GM12878 (cell line): ENCODE measurements at regions of chr11 and their contacts with region 1.

Region 1: DNA sequence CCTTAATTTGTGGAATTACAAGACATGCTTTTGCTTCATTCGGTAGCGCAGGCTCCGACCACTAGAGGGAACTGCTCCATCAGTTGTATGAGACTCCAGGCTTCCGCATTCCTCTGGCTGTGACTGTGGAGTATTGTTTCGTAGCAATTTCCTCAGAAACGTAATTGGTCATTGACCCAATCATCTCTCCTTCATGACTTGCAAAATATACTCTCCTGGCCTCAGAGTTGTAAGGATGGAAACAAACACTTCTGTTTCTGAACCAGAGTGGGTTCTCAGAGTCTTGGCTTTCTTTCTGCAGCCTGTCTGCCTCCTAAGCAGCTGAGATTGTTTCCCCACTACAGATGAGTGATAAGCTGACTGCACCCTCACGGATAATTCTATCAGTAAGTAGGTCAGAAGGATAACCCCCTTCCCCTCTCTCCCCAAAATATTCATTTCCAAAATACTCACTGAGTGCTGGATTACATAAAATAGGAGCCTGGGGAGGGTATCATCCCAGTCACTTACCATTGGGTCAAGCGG is 146.8 kb upstream of the ZC3H12C start:
- DNase-seq: peak; percentile 92
- ATAC-seq: peak; percentile 93
- H3K4me3 ChIP-seq: peak overlapping the region; percentile 50; the same call in 1 of the 2 replicates
- H3K27ac ChIP-seq: peak overlapping the region; percentile 83
- H3K4me1 ChIP-seq: peaks cover 6% of the 10 kb centered on the region; the same call in 1 of the 2 replicates
- H3K27me3 ChIP-seq: no peaks in the 10 kb centered on the region
- CTCF ChIP-seq: peak; percentile 93 to 98 (median 96)
- EP300 ChIP-seq: no peak
- POLR2A ChIP-seq: no peak
- RAD21 ChIP-seq: peak; percentile 97

Region 2: GRCh38 chr11:109853156-109853776 is 93.1 kb before region 1 on chr11:
- CTCF ChIA-PET with region 1: interaction called, 251 read pairs
- POLR2A ChIA-PET with region 1: no interaction called
- RAD21 ChIA-PET with region 1: interaction called, 186 read pairs
- SMC1A ChIA-PET with region 1: interaction called, 165 read pairs
- in situ Hi-C with region 1: no loop called
- intact Hi-C with region 1: no loop called
- DNase-seq: peak; percentile 56
- ATAC-seq: peak; percentile 89
- H3K4me3 ChIP-seq: no peak overlapping the region
- H3K27ac ChIP-seq: no peak overlapping the region
- H3K4me1 ChIP-seq: no peaks in the 10 kb centered on the region
- H3K27me3 ChIP-seq: no peaks in the 10 kb centered on the region
- CTCF ChIP-seq: peak; percentile 69 to 95 (median 81)
- EP300 ChIP-seq: no peak
- POLR2A ChIP-seq: no peak
- RAD21 ChIP-seq: peak; percentile 99

Region 3: GRCh38 chr11:109971184-109971523 is 24.8 kb after region 1 on chr11:
- CTCF ChIA-PET with region 1: interaction called, 9 read pairs
- POLR2A ChIA-PET with region 1: interaction called, 12 read pairs
- RAD21 ChIA-PET with region 1: interaction called, 185 read pairs
- SMC1A ChIA-PET with region 1: interaction called, 223 read pairs
- in situ Hi-C with region 1: no loop called
- intact Hi-C with region 1: no loop called
- DNase-seq: no peak
- ATAC-seq: peak; percentile 32
- H3K4me3 ChIP-seq: peak overlapping the region; percentile 8; the same call in 1 of the 2 replicates
- H3K27ac ChIP-seq: peak overlapping the region; percentile 56
- H3K4me1 ChIP-seq: peaks cover 38% of the 10 kb centered on the region
- H3K27me3 ChIP-seq: no peaks in the 10 kb centered on the region
- CTCF ChIP-seq: no peak
- EP300 ChIP-seq: no peak
- POLR2A ChIP-seq: no peak
- RAD21 ChIP-seq: no peak

Region 4: GRCh38 chr11:110000031-110000502 is 53.7 kb after region 1 on chr11:
- CTCF ChIA-PET with region 1: interaction called, 5 read pairs
- POLR2A ChIA-PET with region 1: interaction called, 3 read pairs
- RAD21 ChIA-PET with region 1: interaction called, 6 read pairs
- SMC1A ChIA-PET with region 1: interaction called, 85 read pairs
- in situ Hi-C with region 1: no loop called
- intact Hi-C with region 1: loop called (anchors 1 kb)
- DNase-seq: peak; percentile 92
- ATAC-seq: peak; percentile 96
- H3K4me3 ChIP-seq: no peak overlapping the region
- H3K27ac ChIP-seq: peak overlapping the region; percentile 62; the same call in 1 of the 2 replicates
- H3K4me1 ChIP-seq: peaks cover 19% of the 10 kb centered on the region
- H3K27me3 ChIP-seq: no peaks in the 10 kb centered on the region
- CTCF ChIP-seq: no peak
- EP300 ChIP-seq: peak; percentile 100
- POLR2A ChIP-seq: no peak
- RAD21 ChIP-seq: peak; percentile 43; the same call in 1 of the 2 replicates

Region 5: DNA sequence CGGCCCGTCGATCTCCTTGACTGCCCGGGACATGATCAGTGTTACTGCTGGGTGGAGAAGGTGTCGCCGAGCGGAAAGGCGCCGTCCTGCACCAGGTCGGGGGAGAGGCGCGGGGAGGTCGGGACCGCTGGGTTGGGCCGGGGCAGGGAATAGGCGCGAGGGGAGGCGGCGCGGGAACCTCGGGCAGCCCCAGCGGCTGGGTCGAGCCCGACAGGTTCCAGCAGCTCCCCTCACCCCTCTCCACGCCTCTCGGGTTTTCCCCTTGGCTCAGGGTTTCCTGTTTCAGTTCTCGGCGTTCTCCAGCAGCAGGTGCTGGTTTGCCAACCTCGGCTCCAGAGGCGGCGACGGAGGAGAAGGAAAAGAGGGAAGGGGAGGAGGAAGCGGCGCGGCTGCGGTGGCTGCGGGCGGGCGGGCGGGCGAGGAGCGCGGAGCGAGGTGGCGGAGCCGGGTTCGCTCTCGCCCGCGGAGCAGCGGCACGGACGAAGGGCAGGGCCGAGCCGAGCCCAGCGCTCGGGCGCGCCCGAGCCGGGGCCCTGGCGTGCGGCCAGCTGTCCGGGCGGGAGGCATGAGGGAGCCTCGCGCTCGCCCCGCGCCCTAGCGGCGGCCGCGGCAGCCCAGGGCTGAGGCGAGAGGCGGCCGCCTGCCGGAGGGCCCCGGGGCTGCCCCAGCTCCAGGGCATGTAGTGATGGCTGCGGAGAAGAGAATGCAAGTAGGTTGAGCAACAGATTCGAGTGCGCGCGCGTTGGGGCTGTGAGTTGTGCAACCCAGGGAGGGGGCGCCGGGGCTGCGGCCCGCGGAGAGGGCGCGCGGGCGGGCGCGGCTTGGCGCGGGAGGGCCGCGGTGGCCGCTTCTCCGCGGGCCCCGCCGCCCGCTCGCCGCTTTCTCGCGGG is 146.4 kb after region 1 on chr11 and contains the start of gene ZC3H12C:
- CTCF ChIA-PET with region 1: interaction called, 14 read pairs
- POLR2A ChIA-PET with region 1: interaction called, 4 read pairs
- RAD21 ChIA-PET with region 1: interaction called, 37 read pairs
- SMC1A ChIA-PET with region 1: interaction called, 14 read pairs
- in situ Hi-C with region 1: no loop called
- intact Hi-C with region 1: loop called (anchors 1 kb)
- DNase-seq: no peak
- ATAC-seq: peak; percentile 60
- H3K4me3 ChIP-seq: peak within 1 kb of the TSS; percentile 72
- H3K27ac ChIP-seq: peak within 1 kb of the TSS; percentile 75
- H3K4me1 ChIP-seq: peaks cover 21% of the 10 kb centered on the region
- H3K27me3 ChIP-seq: no peaks in the 10 kb centered on the region
- CTCF ChIP-seq: peak; percentile 19 to 44 (median 40); a peak in 5 of 6 replicates
- EP300 ChIP-seq: peak; percentile 58 to 63; a peak in 2 of 4 replicates
- POLR2A ChIP-seq: peak; percentile 80
- RAD21 ChIP-seq: peak; percentile 49
- polyA plus RNA-seq, gene ZC3H12C: 0.31 to 0.68 TPM

Region 6: DNA sequence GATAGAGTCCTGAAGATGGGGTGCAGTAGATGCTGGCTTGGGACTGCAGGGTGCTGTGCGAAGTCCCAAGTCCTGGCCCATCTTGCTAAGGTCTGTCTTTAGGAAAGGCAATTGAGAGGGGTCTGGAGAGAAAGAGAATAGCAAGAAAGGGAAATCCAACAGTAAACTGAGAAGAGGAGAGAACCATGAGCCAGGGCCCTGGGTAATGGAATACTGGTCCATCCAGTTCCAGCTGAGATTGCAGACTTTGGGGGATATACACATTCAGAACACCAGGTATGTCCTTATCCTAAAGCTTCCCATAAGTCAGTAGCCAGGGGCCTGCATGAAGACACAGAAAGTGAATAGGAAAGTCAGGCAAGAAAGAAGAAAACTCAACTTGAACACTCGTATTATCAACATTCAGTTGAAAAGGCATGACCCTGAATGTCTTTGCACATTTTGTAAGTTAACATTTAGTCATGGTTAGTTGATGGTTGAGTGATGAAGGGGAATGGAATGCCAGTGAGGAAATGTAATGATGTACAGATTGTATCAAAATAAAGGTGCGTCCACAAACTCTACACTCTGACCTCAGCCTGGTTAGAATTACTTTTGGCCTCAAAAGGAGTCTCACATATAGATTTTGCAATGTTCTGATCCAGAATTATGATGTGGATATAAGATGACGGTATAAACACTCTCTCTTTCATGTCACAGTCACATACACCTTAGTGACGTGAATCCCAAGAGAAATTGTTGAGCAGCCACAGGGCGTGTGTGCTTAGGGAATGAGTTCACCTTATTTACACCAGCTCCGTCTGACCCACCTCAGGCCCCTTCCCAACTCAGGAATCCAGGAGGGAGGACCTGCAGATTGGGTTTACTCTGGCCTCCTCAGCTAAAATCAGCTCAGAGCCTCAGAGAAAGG is 249.7 kb after region 1 on chr11:
- CTCF ChIA-PET with region 1: interaction called, 21 read pairs
- POLR2A ChIA-PET with region 1: no interaction called
- RAD21 ChIA-PET with region 1: interaction called, 29 read pairs
- SMC1A ChIA-PET with region 1: interaction called, 86 read pairs
- in situ Hi-C with region 1: no loop called
- intact Hi-C with region 1: loop called (anchors 1 kb)
- DNase-seq: no peak
- ATAC-seq: no peak
- H3K4me3 ChIP-seq: no peak overlapping the region
- H3K27ac ChIP-seq: no peak overlapping the region
- H3K4me1 ChIP-seq: peaks cover 4% of the 10 kb centered on the region; the same call in 1 of the 2 replicates
- H3K27me3 ChIP-seq: no peaks in the 10 kb centered on the region
- CTCF ChIP-seq: no peak
- EP300 ChIP-seq: no peak
- POLR2A ChIP-seq: no peak
- RAD21 ChIP-seq: no peak

Region 7: GRCh38 chr11:110429731-110430266 is 483.4 kb after region 1 on chr11 and contains the start of gene FDX1:
- CTCF ChIA-PET with region 1: interaction called, 9 read pairs
- POLR2A ChIA-PET with region 1: no interaction called
- RAD21 ChIA-PET with region 1: interaction called, 4 read pairs
- SMC1A ChIA-PET with region 1: interaction called, 4 read pairs
- in situ Hi-C with region 1: no loop called
- intact Hi-C with region 1: loop called (anchors 1 kb)
- DNase-seq: peak; percentile 23
- ATAC-seq: peak; percentile 92
- H3K4me3 ChIP-seq: peak within 1 kb of the TSS; percentile 67
- H3K27ac ChIP-seq: peak within 1 kb of the TSS; percentile 47
- H3K4me1 ChIP-seq: peaks cover 10% of the 10 kb centered on the region
- H3K27me3 ChIP-seq: no peaks in the 10 kb centered on the region
- CTCF ChIP-seq: peak; percentile 41 to 61 (median 42); a peak in 5 of 6 replicates
- EP300 ChIP-seq: no peak
- POLR2A ChIP-seq: peak; percentile 78
- RAD21 ChIP-seq: no peak
- polyA plus RNA-seq, gene FDX1: 3.9 to 9.6 TPM